ENCODE measurements at regions of chr4 and their contacts with region 1.

Region 1: DNA sequence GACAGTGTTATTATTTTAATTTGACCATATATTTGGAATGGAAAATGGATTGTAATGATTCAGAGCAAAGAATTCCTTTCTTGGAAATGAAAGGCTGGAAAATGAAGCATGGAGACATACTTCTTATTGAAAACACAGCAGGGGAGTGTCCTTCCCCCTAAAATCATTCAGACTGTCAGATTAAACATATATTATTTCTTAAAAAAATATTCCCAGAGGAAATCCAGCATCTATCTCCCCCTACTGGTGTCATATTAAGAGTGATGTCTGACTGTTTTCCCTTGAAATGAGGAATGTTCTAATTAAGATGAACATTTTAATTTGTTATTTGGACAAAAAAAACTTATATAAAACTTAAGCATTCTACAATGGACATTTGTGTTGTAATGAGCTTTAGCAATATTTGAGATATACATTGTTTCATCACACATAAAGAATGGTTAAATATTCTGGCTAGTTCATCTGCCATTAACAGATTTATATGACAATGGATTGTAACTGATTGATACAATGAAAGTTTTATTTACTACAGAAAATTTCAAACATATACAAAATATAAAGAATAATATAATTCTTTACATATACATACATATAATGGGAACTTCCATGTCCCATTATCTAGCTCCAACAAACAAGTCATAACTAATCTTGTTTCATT is 264.6 kb downstream of the SPRY1 start:
- DNase-seq: no peak
- H3K4me3 Mint-ChIP-seq: no peak overlapping the region
- H3K27ac Mint-ChIP-seq: no peak overlapping the region
- H3K4me1 Mint-ChIP-seq: peaks cover 19% of the 10 kb centered on the region
- H3K27me3 Mint-ChIP-seq: no peaks in the 10 kb centered on the region
- CTCF ChIP-seq: peak; percentile 28

Region 2: GRCh38 chr4:123350191-123350544 is 311.0 kb before region 1 on chr4:
- CTCF ChIA-PET with region 1: no interaction called
- intact Hi-C with region 1: loop called (anchors 2 kb)
- DNase-seq: peak; percentile 19
- H3K4me3 Mint-ChIP-seq: no peak overlapping the region
- H3K27ac Mint-ChIP-seq: no peak overlapping the region
- H3K4me1 Mint-ChIP-seq: peaks cover 8% of the 10 kb centered on the region
- H3K27me3 Mint-ChIP-seq: no peaks in the 10 kb centered on the region
- CTCF ChIP-seq: no peak

Region 3: DNA sequence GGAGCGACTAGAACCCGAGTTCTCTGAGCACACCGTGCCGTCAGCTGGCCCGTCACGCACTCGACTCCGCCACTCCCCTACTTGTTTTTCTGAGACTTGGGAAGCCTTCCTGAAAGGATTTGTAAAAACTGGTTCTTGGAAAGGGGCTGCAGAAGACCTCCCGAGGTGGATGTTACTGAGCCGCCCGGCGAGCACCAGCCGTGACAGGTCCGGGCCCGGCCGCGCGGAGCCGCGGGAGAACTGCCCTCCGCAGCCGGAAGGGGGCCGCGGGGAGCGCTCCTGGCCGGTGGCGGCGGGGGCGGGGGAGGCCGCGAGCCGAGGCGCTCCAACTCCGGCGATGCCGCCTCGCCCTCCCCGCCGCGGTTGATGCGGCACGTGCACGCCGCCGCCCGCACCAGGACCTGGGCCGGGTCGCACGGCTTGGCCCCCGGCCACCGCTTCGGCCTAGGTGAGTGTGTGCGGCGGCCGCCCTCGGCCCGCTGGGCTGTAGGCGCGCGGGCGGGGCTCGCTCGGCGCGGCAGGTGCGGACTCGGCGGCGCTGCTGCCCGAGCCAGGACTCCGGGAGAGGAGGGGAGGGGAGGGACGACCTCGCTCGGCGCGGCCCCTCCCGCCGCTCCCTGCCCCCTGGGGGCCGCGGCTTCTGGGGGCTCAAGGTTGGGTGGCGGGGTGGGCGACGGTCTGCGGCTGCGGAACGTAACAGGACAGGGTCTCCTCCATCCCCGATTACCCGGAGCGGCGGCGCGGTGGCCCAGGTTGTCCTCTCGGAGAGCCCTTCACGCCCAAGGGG is 262.9 kb before region 1 on chr4:
- CTCF ChIA-PET with region 1: no interaction called
- intact Hi-C with region 1: loop called (anchors 2 kb)
- DNase-seq: peak; percentile 82
- H3K4me3 Mint-ChIP-seq: peak overlapping the region; percentile 82
- H3K27ac Mint-ChIP-seq: peak overlapping the region; percentile 92
- H3K4me1 Mint-ChIP-seq: peaks cover 23% of the 10 kb centered on the region
- H3K27me3 Mint-ChIP-seq: no peaks in the 10 kb centered on the region
- CTCF ChIP-seq: peak; percentile 46

Region 4: GRCh38 chr4:123564758-123565346 is 96.4 kb before region 1 on chr4:
- CTCF ChIA-PET with region 1: interaction called, 3 read pairs
- intact Hi-C with region 1: loop called (anchors 2 kb)
- DNase-seq: peak; percentile 68
- H3K4me3 Mint-ChIP-seq: no peak overlapping the region
- H3K27ac Mint-ChIP-seq: no peak overlapping the region
- H3K4me1 Mint-ChIP-seq: peaks cover 32% of the 10 kb centered on the region
- H3K27me3 Mint-ChIP-seq: no peaks in the 10 kb centered on the region
- CTCF ChIP-seq: peak; percentile 69

Region 5: DNA sequence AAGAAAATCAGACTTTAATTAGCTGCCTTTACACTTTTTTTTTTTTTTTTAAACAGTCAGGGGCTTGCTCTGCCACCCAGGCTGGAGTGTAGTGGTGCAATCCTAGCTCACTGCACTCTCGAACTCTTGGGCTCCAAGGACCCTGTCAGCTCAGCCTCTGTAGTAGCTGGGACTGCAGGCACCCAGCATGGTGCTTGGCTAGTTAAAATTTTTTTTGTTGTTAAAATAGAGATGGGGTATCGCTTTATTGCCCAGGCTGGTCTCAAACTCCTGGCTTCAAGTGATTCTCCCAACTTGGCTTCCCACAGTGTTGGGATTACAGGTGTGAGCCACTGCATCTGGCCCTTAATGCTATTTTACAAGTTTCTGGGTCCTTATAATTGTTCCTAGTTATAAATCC is 94.4 kb after region 1 on chr4:
- CTCF ChIA-PET with region 1: no interaction called
- intact Hi-C with region 1: no loop called
- DNase-seq: no peak
- H3K4me3 Mint-ChIP-seq: no peak overlapping the region
- H3K27ac Mint-ChIP-seq: no peak overlapping the region
- H3K4me1 Mint-ChIP-seq: no peaks in the 10 kb centered on the region
- H3K27me3 Mint-ChIP-seq: no peaks in the 10 kb centered on the region
- CTCF ChIP-seq: no peak

Region 6: GRCh38 chr4:124322234-124323065 is 661.2 kb after region 1 on chr4:
- CTCF ChIA-PET with region 1: no interaction called
- intact Hi-C with region 1: loop called (anchors 10 kb)
- DNase-seq: no peak
- H3K4me3 Mint-ChIP-seq: no peak overlapping the region
- H3K27ac Mint-ChIP-seq: no peak overlapping the region
- H3K4me1 Mint-ChIP-seq: peaks cover 7% of the 10 kb centered on the region
- H3K27me3 Mint-ChIP-seq: no peaks in the 10 kb centered on the region
- CTCF ChIP-seq: no peak

Measured in Calu3 (cell line).